ENCODE measurements at regions of chr15 and their contacts with region 1.

Region 1: DNA sequence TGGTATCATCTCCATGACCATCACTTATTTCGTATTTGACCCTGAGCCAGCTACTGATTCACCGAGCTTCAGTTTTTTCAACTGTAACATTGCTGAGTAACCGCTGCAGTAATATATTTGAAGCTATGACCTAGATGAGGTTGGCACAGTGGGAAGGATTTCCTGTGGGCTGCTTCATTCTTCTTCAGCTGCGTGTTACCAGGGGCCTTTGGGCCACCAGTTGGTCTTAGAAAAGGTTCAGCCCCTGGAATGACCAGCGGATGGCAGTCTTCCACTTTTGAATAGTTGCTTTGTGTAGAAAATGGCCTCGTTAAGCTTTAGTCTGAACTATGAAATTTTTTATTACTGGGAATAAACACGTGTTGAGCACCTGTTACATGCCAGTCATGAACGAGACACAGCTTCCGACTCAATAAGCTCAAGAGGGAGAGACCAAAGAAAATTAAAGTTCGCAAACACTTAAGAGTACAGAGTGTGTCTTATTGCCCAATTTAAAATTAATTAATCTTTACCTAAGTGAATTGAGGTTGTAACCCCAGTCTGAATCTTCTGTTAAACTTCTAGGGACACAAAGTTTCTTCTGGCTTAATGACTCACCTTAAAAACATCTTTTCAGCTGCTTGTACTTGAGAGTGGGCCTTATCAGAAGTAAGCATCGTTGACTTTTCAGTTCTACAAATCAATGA is 57.6 kb upstream of the NR2E3 start:
- DNase-seq: peak in 2 of 3 donors; percentile 65 to 88
- ATAC-seq: peak; percentile 91
- H3K4me3 ChIP-seq: no peak overlapping the region
- H3K4me1 ChIP-seq: peaks cover 45% of the 10 kb centered on the region
- CTCF ChIP-seq: no peak

Region 2: DNA sequence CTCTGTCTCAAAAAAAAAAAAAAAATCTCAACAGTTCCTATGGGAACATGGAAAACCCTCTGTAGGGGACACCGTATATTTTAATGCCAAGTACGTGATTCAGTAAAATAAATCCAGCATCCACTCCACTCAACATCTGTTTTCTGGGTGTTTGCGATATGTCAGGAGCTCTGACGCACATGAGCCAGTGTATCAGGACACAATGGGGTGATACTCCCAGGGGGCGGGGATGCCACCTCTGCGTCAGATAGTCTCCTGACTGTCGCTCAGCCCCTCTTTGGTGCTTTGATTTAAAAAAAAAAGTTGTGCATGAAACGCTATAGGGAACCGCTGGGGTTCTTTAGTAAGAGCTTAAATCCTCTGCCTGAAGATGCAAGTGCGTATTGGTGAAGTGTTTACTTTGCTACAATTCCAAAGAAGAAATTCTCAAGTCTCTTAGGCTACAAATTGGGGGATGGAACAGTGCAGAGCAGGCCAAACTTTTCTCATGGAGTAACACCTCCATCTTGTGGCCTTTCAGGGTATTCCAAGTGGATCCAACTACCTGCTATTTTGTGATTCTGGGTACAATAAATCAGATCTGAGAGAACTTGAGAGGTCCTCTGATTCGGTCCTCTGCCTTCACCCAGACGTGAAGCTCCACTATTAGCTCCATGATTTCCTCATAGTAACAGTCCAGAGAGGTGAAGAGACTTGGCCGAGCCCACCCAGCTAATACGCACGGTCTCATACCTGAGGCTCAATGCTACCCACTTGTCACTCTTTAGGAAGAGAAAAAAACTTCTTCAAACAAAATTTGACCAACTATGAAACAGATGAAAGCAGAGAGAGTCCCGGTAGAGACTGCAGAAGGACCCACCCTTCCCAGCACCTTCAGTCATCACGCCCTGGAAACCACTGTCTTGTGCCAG is 48.3 kb after region 1 on chr15:
- intact Hi-C with region 1: loop called in 1 of 2 experiments (anchors 10 kb)
- DNase-seq: peak in 1 of 3 donors; percentile 78
- ATAC-seq: peak; percentile 92
- H3K4me3 ChIP-seq: no peak overlapping the region
- H3K4me1 ChIP-seq: peaks cover 8% of the 10 kb centered on the region
- CTCF ChIP-seq: peak; percentile 56

Region 3: GRCh38 chr15:71921191-71921590 is 168.4 kb after region 1 on chr15:
- intact Hi-C with region 1: no loop called
- DNase-seq: no peak
- ATAC-seq: no peak
- H3K4me3 ChIP-seq: no peak overlapping the region
- H3K4me1 ChIP-seq: no peaks in the 10 kb centered on the region
- CTCF ChIP-seq: no peak